ENCODE measurements at regions of chr12 and their contacts with region 1.

Region 1: DNA sequence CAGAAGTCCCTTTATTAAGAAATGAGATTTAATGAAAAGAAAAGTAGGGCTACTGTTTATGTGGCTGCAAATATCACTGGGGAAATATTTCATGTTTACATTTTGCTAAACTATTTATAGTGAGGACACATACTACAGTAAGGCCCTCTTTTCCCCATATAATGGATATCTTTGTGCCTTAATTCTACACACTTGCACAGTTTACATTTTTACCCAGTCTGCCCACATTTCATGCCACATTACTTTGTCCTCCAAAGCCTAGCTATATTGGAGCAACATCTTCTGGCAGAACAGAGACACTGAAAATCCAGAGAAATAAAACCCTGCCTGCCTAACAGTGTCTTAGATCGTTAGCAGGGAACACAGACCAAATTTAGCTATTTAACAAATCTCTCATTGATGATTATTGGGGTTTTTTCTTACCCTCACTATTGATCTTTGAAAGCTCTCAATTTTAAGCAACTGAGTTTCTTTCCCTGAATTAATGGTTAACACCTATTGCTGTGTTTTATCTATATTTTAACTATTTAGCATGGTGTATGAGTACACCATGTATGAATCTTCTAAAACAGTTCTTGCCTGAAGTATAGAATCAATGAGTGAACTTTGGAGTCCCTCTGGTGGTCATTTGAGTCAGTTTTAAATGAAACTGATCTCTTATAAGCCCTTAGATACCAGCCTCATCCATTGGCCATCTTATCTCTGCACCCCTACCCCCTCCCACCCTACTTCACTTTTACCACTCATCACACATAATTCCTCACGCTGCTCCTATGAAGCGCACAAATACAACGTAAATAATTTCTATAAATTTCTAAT is 170.2 kb downstream of the BCAT1 start:
- DNase-seq: no peak
- ATAC-seq: peak; percentile 95
- H3K4me3 Mint-ChIP-seq: no peak overlapping the region
- H3K27ac Mint-ChIP-seq: peak overlapping the region; percentile 50
- H3K4me1 Mint-ChIP-seq: peaks cover 34% of the 10 kb centered on the region
- H3K27me3 Mint-ChIP-seq: no peaks in the 10 kb centered on the region
- CTCF ChIP-seq: peak; percentile 61

Region 2: DNA sequence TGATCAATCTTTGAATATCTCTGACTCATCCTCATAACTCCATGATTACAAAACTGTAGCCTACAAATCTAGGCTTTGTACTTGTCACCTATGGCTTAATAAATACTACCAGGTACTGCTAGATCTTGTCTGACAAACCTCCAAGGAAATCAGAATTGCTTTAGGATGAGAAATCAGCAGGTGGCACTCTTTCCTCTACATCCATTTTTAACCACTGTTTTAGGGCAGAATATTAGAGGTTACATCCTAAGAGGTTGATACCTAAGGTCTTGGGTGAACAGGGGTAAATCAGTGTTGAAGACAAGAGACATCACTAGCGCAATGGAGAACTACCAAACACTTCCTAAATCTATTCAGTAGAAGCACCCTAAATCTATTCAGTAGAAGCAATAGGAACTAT is 766.2 kb before region 1 on chr12:
- CTCF ChIA-PET with region 1: interaction called, 3 read pairs
- POLR2A ChIA-PET with region 1: no interaction called
- intact Hi-C with region 1: loop called (anchors 1 kb)
- DNase-seq: no peak
- ATAC-seq: no peak
- H3K4me3 Mint-ChIP-seq: no peak overlapping the region
- H3K27ac Mint-ChIP-seq: no peak overlapping the region
- H3K4me1 Mint-ChIP-seq: no peaks in the 10 kb centered on the region
- H3K27me3 Mint-ChIP-seq: no peaks in the 10 kb centered on the region
- CTCF ChIP-seq: no peak

Region 3: DNA sequence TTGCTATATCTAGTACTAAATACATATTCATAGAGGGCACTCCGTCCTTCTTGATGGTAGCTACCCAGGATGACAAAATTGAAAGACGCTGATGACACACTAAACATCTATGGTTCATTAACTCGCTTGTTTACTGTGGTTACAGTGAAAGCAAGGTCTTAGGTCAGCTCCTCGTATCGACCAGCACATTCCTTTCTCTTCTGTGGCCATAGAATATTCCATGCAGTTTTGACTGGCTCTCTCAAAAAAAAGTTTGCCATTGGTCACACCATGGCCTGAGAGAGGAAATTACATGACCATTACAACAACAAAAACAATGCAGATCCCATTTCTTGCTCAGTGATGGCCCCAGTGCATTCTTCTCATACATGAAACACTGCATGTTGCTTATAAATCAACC is 417.8 kb before region 1 on chr12:
- CTCF ChIA-PET with region 1: interaction called, 38 read pairs
- POLR2A ChIA-PET with region 1: interaction called, 5 read pairs
- intact Hi-C with region 1: loop called (anchors 1 kb)
- DNase-seq: no peak
- ATAC-seq: peak; percentile 53
- H3K4me3 Mint-ChIP-seq: peak overlapping the region; percentile 69
- H3K27ac Mint-ChIP-seq: peak overlapping the region; percentile 76
- H3K4me1 Mint-ChIP-seq: peaks cover 65% of the 10 kb centered on the region
- H3K27me3 Mint-ChIP-seq: no peaks in the 10 kb centered on the region
- CTCF ChIP-seq: no peak

Region 4: GRCh38 chr12:24561882-24562760 is 216.6 kb before region 1 on chr12:
- CTCF ChIA-PET with region 1: interaction called, 3 read pairs
- POLR2A ChIA-PET with region 1: no interaction called
- intact Hi-C with region 1: loop called (anchors 1 kb)
- DNase-seq: peak; percentile 46
- ATAC-seq: peak; percentile 55
- H3K4me3 Mint-ChIP-seq: peak overlapping the region; percentile 87
- H3K27ac Mint-ChIP-seq: peak overlapping the region; percentile 76
- H3K4me1 Mint-ChIP-seq: peaks cover 28% of the 10 kb centered on the region
- H3K27me3 Mint-ChIP-seq: peaks cover 23% of the 10 kb centered on the region
- CTCF ChIP-seq: no peak

Region 5: DNA sequence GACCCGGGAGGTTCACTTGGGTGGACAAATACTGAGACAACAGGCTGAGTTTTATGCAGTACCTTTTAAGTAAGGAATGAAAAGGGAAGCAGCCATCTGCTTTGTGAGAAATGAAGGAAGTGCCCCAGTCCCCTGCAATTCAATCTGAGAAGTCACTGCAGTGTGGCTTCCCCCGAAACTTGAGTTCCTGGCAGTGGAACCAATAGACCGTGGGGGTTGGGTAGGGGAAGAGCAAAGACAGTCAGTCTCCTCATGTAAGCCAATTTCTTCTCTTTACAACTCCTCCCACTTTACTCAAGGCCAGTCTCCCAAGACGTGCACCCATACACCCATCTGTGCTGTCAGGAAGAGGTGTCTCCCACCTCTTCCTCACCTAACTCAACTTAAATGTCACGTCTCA is 36.3 kb before region 1 on chr12:
- CTCF ChIA-PET with region 1: interaction called, 6 read pairs
- POLR2A ChIA-PET with region 1: interaction called, 7 read pairs
- intact Hi-C with region 1: loop called (anchors 1 kb)
- DNase-seq: peak; percentile 29
- ATAC-seq: peak; percentile 87
- H3K4me3 Mint-ChIP-seq: peak overlapping the region; percentile 64
- H3K27ac Mint-ChIP-seq: peak overlapping the region; percentile 90
- H3K4me1 Mint-ChIP-seq: peaks cover 56% of the 10 kb centered on the region
- H3K27me3 Mint-ChIP-seq: no peaks in the 10 kb centered on the region
- CTCF ChIP-seq: no peak

Measured in activated B cell treated with CpG ODN at 0.5 μM for 24 hours (primary cell).